Posterior vena cava (tissue), 2 donors: ENCODE measurements at regions of chr12 and their contacts with region 1.

Region 1: DNA sequence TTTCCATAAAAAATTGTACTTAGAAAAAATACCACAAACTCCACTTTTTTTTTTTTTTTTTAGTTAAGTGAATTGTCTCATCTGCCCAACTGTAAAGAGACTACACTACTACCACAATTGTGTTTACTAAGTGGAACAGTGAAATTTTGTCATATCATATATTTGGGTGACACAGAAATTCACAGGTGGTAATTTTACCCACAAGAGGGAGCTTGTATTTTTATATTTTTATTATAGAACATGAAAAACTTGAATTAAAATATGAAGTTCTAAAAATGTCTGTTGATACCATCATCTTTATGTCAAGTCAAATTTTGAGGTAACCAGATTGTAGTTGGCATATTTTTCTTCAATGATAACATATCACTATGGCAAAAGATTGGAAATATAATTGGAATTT is 329.4 kb upstream of the SOX5 start:
- DNase-seq: no peak

Region 2: GRCh38 chr12:24293549-24293948 is 14.7 kb after region 1 on chr12:
- intact Hi-C with region 1: no loop called
- DNase-seq: no peak

Region 3: DNA sequence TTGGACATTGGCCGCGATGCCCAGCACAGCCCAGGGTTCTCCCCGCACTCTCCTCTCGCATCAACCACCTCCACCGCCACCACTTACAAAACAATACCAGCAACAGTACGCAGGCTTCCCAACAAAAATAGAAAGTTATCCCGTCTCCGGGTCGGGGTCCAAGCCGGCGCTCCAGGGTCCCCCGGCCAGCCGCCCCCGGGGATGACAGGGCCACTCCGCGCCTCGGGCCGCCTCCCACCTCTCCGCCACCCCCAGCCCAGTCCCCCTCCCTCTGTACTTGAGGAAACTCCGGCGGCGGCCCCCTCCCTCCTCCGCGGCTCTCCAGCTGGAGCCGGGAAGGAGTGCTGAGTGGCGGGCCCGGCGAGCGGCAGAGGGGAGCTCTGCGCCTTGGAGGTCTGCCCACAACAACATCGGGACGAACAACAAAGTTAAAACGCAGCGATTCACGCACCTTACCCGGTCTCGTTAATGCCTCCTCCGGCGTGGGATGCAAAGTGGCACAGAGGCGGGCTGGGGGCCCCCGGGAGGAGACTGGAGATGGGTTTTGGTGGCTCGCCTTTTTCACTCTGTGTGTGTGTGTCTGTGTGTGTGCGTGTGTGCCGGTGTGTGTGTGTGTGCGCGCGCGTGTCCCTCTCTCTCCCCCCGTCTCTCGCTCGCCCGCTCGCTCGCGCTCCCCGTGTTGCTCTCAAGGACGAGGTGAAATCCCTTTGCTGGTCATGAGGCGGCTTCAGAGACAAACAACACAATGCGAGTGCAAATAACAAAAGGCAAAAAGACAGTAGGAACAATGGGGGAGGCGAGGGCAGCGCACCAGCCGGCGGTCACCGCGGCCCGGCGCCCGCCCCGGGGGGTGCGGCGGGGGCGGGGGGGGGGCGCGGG is 283.3 kb after region 1 on chr12:
- intact Hi-C with region 1: no loop called
- DNase-seq: peak; percentile 89

Region 4: DNA sequence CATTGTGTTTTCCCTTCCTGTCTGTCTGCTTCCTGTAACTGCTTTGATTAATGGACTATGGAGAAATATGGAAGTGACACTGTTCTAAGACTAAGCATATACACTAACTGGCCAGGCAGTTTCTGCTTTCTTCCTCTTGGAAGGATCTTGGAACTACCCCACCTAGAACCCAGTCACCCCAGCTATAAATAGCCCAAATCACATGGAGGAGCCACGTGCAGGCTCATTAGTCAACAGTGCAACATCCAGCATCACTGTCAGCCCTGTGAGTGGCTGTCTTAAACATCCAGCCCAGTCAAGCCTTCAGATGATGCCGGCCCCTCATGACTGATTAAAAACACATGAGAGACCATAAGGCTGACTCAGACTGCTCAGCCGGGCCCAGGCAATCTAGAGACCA is 630.8 kb after region 1 on chr12:
- intact Hi-C with region 1: loop called in 1 of 2 experiments (anchors 5 kb)
- DNase-seq: no peak